Activated B cell treated with CpG ODN at 0.5 μM for 24 hours (primary cell): ENCODE measurements at regions of chr11 and their contacts with region 1.

Region 1: DNA sequence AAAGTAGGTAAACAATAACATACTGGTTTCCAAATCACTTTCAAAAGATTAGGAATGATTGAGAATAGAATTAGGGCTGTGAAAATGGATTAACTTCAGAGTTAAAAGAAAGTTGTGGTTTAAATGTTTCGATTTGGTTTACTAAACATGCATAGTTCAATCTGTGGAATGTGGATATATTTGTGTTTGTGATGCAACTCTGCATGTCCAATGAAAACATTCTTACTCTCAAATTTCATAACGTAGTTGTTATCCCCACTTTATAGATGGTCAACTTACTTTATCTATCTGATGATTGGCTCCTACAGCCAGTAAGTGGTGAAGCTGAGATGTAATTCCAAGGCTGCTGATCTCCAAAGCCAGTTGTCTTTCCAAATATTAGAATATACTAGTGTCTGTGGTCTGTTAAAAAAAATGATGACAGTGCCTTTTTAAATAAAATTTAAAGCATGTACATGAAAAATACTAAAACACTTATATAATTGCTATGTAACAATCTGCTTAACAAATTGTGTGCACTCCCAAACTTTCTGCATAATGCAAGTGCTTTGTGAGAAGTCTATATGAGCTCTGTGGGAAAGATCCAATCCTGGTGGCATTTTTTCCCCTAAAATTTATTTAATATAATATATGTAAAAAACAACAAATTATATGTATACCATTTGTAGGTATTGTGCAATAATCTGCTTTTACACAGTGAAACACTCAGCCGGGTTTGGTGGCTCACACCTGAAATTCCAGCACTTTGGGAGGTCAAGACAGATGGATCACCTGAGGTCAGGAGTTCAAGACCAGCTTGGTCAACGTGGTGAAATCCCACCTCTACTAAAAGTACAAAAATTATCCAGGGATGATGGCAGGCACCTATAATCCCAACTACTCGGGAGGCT is 9.7 kb upstream of the SIK3 start:
- DNase-seq: no peak
- ATAC-seq: no peak
- H3K4me3 Mint-ChIP-seq: no peak overlapping the region
- H3K27ac Mint-ChIP-seq: no peak overlapping the region
- H3K4me1 Mint-ChIP-seq: peaks cover 4% of the 10 kb centered on the region
- H3K27me3 Mint-ChIP-seq: no peaks in the 10 kb centered on the region
- CTCF ChIP-seq: no peak

Region 2: DNA sequence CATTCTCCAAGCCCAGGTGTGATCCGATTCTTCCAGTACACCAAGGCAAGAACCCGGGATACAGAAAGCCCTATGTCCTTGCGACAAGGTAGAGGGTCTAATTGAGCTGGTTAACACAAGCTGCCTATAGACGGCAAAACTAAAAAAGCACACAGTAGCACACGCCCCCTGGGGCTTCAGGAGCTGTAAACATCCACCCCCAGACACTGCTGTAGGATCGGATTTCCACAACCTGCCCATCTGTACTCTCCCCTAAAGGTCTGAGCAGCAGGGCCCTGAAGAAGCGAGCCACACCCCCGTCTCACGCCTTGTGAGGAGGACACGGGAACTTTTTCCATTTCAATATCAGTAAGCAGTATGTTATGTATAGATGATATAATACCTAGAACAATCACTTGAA is 959.9 kb before region 1 on chr11:
- CTCF ChIA-PET with region 1: no interaction called
- POLR2A ChIA-PET with region 1: no interaction called
- intact Hi-C with region 1: no loop called
- DNase-seq: no peak
- ATAC-seq: no peak
- H3K4me3 Mint-ChIP-seq: no peak overlapping the region
- H3K27ac Mint-ChIP-seq: no peak overlapping the region
- H3K4me1 Mint-ChIP-seq: no peaks in the 10 kb centered on the region
- H3K27me3 Mint-ChIP-seq: peaks cover 14% of the 10 kb centered on the region
- CTCF ChIP-seq: no peak

Region 3: DNA sequence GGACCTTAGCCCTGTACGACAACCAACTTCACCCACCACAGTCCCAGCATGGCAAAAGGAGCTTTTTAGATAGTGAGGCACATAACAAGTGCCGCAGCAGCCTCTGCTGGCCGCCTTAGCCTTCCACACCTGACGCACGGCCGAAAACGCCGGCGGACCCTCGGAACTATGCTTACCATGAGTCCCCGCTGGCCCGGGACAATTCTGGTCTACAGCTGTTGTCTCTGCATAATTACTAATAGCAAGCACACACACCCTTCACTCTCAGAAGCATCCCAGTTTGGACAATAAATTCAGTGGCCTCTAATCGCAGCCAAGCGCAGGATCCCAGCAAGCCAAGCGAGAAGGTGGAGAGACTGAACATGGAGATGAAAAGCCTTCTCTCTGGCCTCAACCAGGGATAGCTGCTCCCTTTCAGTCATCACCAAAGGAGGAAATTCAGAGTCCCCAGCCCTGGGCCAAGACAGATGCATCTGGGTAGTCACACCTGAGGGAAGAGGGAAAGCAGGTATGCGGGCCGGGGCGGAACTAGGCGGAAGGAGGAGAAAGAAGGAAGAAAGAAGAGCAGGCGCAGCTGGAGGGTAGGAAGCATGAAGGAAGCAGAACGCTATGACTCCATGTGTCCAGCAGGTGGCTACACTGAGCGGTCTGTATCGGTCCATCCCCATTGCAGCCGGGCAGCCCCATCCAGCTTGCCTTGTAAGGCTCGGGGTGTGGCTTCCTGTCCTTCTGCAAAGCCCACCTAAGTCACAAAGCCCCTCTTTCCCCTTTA is 375.5 kb before region 1 on chr11:
- CTCF ChIA-PET with region 1: interaction called, 7 read pairs
- POLR2A ChIA-PET with region 1: no interaction called
- intact Hi-C with region 1: loop called (anchors 1 kb)
- DNase-seq: peak; percentile 40
- ATAC-seq: peak; percentile 97
- H3K4me3 Mint-ChIP-seq: peak overlapping the region; percentile 53
- H3K27ac Mint-ChIP-seq: no peak overlapping the region
- H3K4me1 Mint-ChIP-seq: peaks cover 17% of the 10 kb centered on the region
- H3K27me3 Mint-ChIP-seq: peaks cover 5% of the 10 kb centered on the region
- CTCF ChIP-seq: no peak

Region 4: GRCh38 chr11:116874254-116874653 is 233.7 kb before region 1 on chr11:
- CTCF ChIA-PET with region 1: interaction called, 71 read pairs
- POLR2A ChIA-PET with region 1: no interaction called
- intact Hi-C with region 1: no loop called
- DNase-seq: no peak
- ATAC-seq: no peak
- H3K4me3 Mint-ChIP-seq: no peak overlapping the region
- H3K27ac Mint-ChIP-seq: no peak overlapping the region
- H3K4me1 Mint-ChIP-seq: no peaks in the 10 kb centered on the region
- H3K27me3 Mint-ChIP-seq: no peaks in the 10 kb centered on the region
- CTCF ChIP-seq: no peak

Region 5: GRCh38 chr11:116879800-116880625 is 227.9 kb before region 1 on chr11:
- CTCF ChIA-PET with region 1: interaction called, 71 read pairs
- POLR2A ChIA-PET with region 1: interaction called, 11 read pairs
- intact Hi-C with region 1: loop called (anchors 1 kb)
- DNase-seq: no peak
- ATAC-seq: peak; percentile 72
- H3K4me3 Mint-ChIP-seq: no peak overlapping the region
- H3K27ac Mint-ChIP-seq: no peak overlapping the region
- H3K4me1 Mint-ChIP-seq: peaks cover 9% of the 10 kb centered on the region
- H3K27me3 Mint-ChIP-seq: no peaks in the 10 kb centered on the region
- CTCF ChIP-seq: no peak

Region 6: DNA sequence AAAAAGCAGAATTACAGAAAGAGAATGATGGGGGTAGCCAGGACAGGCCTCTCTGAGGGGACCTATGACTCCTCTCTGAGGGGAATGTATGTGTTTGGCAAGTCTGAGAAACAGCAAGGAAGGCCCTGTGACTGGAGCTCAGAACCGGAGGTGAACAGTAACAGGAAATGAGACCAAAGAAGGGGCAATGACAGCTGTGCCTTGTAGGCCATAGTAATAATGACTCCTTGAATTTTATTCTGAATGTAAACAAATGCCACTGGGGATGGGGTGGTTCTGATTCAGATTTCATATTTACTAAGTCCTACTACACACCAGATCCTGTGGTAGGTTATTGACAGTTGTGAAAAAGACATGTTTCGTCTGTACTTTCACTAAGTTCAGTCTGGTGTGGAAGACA is 217.8 kb before region 1 on chr11:
- CTCF ChIA-PET with region 1: interaction called, 19 read pairs
- POLR2A ChIA-PET with region 1: no interaction called
- intact Hi-C with region 1: loop called (anchors 1 kb)
- DNase-seq: no peak
- ATAC-seq: no peak
- H3K4me3 Mint-ChIP-seq: no peak overlapping the region
- H3K27ac Mint-ChIP-seq: no peak overlapping the region
- H3K4me1 Mint-ChIP-seq: peaks cover 9% of the 10 kb centered on the region
- H3K27me3 Mint-ChIP-seq: no peaks in the 10 kb centered on the region
- CTCF ChIP-seq: no peak

Region 7: DNA sequence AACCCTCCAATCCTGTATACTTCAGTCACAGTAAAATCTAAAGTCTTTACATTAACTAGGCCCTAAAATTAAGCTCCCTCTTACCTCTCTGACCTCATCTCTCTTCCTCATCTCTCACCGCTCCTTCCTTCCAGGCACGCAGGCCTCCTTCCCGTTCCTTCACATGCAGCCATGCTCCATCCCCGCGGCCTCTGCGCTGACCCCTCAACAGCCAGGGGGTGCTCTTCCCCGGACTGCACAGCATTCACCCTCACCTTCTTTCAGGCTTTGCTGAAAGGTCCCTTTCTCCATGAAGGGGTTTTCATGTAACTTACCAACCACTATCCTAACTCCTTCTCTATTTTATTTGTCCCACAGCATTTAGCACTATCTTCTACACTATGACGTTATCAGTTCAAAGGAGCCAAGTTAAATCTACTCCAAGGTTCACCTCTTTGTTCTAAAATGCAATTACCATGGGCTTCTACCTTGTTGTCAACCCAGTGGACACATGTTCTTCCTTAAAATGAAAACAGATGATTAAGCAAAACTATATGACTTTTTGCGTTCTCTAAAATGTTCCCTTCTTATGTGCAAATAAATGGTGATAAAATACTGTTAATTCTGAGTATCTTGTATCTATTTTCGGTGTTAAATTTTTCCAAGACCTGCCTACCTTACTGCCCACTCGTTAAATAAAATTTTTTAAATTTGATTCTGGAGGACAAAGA is 212.7 kb before region 1 on chr11:
- CTCF ChIA-PET with region 1: interaction called, 19 read pairs
- POLR2A ChIA-PET with region 1: no interaction called
- intact Hi-C with region 1: loop called (anchors 1 kb)
- DNase-seq: peak; percentile 24
- ATAC-seq: peak; percentile 67
- H3K4me3 Mint-ChIP-seq: no peak overlapping the region
- H3K27ac Mint-ChIP-seq: peak overlapping the region; percentile 42
- H3K4me1 Mint-ChIP-seq: peaks cover 12% of the 10 kb centered on the region
- H3K27me3 Mint-ChIP-seq: no peaks in the 10 kb centered on the region
- CTCF ChIP-seq: no peak

Region 8: DNA sequence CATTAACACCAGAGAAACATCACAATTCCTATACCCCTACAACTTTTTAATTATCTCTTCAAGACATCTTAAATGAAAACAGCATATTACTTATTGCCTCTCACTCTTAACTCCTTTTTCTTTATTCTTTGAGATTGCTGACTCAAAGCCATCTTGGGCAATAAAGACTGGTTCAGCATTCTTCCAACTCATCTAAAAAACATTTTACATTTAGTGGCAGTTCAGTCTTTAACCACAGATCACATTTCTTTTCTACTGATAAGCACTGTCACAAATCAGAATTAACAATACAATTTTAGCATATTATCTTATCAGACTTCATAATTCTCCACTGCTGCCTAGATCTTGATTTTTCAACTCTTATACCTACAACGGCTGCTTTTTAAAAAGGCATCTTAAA is 43.7 kb before region 1 on chr11:
- CTCF ChIA-PET with region 1: no interaction called
- POLR2A ChIA-PET with region 1: no interaction called
- intact Hi-C with region 1: no loop called
- DNase-seq: no peak
- ATAC-seq: no peak
- H3K4me3 Mint-ChIP-seq: peak overlapping the region; percentile 37
- H3K27ac Mint-ChIP-seq: peak overlapping the region; percentile 71
- H3K4me1 Mint-ChIP-seq: peaks cover 78% of the 10 kb centered on the region
- H3K27me3 Mint-ChIP-seq: no peaks in the 10 kb centered on the region
- CTCF ChIP-seq: no peak